ENCODE measurements at regions of chr2 and their contacts with region 1.

Region 1: GRCh38 chr2:219294356-219295351 is 14.5 kb downstream of the PTPRN start:
- DNase-seq: peak; percentile 92 to 93 (median 92)
- ATAC-seq: peak; percentile 96 to 98 (median 96)
- H3K4me3 ChIP-seq: peak overlapping the region; percentile 56 to 59 (median 57)
- H3K27ac ChIP-seq: peak overlapping the region in 2 of 3 donors; percentile 40 to 63
- H3K4me1 ChIP-seq: peaks cover 0 to 2% (median 0%) of the 10 kb centered on the region in 4 donors
- H3K27me3 ChIP-seq: no peaks in the 10 kb centered on the region
- CTCF ChIP-seq: peak; percentile 99 to 100 (median 99)
- POLR2A ChIP-seq: peak; percentile 49

Region 2: DNA sequence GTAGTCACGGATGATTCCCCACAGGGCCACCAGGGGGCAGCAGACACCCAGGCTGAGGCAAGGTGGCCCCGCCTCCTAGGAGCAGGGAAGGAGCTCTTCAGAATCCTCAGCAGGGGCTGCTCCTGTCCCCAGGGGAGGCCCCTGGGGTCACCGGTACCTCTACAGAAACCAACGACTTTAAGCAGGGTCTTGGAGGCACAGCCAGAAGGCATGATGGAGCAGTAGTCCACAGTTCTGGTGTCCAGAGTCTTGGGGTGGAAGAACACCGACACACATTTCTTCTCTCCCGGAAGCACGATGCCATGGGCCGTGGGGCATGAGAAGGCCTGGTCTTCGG is 264.9 kb before region 1 on chr2:
- intact Hi-C with region 1: loop called in 1 of 2 experiments (anchors 10 kb)
- DNase-seq: peak; percentile 81 to 88 (median 86)
- ATAC-seq: peak; percentile 93 to 99 (median 98)
- H3K4me3 ChIP-seq: no peak overlapping the region
- H3K27ac ChIP-seq: no peak overlapping the region
- H3K4me1 ChIP-seq: no peaks in the 10 kb centered on the region
- H3K27me3 ChIP-seq: no peaks in the 10 kb centered on the region
- CTCF ChIP-seq: peak; percentile 90 to 99 (median 98)
- POLR2A ChIP-seq: no peak

Region 3: DNA sequence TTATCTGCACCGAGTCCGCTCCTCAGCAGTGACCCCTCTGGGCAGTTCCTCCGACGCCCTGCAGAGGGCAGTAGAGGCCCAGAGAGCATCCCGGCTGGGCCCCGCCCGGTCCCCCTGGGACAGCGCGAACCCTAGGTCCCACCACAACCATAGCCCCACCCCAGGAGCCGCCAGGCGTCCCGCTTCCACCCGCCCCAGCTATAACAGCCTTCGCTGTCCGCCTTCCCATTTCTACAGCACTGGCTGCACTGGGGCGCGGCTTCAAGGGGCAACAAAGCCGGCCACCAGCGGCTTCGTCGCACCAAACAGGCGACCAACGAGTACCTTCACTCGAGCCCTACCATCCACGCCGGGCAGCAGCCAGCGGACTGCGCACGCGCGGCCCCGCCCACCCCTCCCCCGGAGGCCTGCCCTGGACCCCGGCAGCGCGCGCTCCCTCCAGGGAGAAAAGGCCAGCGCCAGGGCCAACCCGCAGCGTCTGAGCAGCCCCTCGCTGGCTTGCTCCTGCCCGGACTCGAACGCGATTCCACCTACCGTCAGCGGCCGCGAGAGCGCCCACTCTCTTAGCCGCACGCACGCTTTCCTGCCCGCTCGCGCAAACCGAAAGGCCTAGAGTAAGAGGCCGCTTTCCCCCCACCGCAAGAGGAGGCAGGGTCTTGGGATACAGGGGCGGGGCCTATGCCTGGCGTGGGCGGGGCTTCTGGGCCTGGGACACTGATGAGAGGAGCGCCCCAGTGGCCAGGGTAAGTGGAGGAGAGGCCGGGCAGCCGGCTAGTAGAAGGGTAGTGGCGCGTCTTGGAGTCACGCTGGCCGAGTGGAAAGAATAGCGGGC is 134.3 kb before region 1 on chr2 and contains the start of gene NHEJ1:
- intact Hi-C with region 1: loop called in 1 of 2 experiments (anchors 5 kb)
- DNase-seq: peak; percentile 97 to 99 (median 98)
- ATAC-seq: peak; percentile 95 to 99 (median 96)
- H3K4me3 ChIP-seq: peak within 1 kb of the TSS; percentile 58 to 70 (median 66)
- H3K27ac ChIP-seq: peak within 1 kb of the TSS; percentile 84 to 89 (median 86)
- H3K4me1 ChIP-seq: peaks cover 0 to 11% (median 2%) of the 10 kb centered on the region in 4 donors
- H3K27me3 ChIP-seq: no peaks in the 10 kb centered on the region
- CTCF ChIP-seq: peak; percentile 96 to 100 (median 98)
- POLR2A ChIP-seq: peak; percentile 60
- total RNA-seq, gene NHEJ1: 5.8 to 16.7 (median 10.9) TPM

Region 4: GRCh38 chr2:219229305-219230058 is 65.2 kb before region 1 on chr2 and contains the starts of genes ANKZF1 and ATG9A:
- intact Hi-C with region 1: loop called in 1 of 2 experiments (anchors 10 kb)
- DNase-seq: peak; percentile 98 to 100 (median 99)
- ATAC-seq: peak; percentile 96 to 99 (median 96)
- H3K4me3 ChIP-seq: peak within 1 kb of the TSS; percentile 66 to 90 (median 77)
- H3K27ac ChIP-seq: peak within 1 kb of the TSS; percentile 90 to 98 (median 90)
- H3K4me1 ChIP-seq: peaks cover 0 to 14% (median 5%) of the 10 kb centered on the region in 4 donors
- H3K27me3 ChIP-seq: no peaks in the 10 kb centered on the region
- CTCF ChIP-seq: peak in 1 of 4 donors; percentile 2
- POLR2A ChIP-seq: peak; percentile 78
- total RNA-seq, gene ANKZF1: 19.3 to 27.8 (median 24.5) TPM
- total RNA-seq, gene ATG9A: 28.3 to 39.6 (median 33.2) TPM

Region 5: DNA sequence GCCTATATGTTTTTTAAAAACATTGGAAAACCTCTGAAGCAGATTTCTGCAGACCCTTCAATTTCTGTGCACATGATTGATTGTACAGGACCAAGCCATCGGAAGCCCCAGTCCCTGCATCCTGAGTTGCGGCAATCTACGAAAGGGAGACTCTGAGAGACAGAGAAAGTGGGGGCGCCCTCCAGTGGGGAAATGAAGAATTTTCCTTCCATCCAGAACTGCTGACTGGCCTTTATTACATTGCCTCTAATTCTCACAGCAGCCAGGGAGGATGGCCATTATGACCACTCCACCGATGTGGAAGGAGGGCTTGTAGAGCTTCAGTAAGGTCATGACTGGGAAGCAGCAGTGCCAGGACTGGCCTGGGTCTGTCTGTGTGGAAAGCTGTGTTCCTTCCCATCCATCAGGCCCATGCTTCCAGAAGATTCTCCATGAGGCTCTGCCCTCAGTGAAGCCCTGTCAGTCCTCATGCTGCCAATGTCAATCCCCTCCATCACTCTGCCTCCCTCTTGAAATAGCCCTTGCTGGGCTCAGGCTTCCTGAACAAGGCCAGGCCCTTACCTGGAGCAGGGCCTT is 57.9 kb after region 1 on chr2:
- intact Hi-C with region 1: no loop called
- DNase-seq: peak in 1 of 3 donors; percentile 52
- ATAC-seq: peak; percentile 46 to 76 (median 67)
- H3K4me3 ChIP-seq: no peak overlapping the region
- H3K27ac ChIP-seq: no peak overlapping the region
- H3K4me1 ChIP-seq: no peaks in the 10 kb centered on the region
- H3K27me3 ChIP-seq: peaks cover 0 to 3% of the 10 kb centered on the region in 2 donors
- CTCF ChIP-seq: peak; percentile 37 to 48 (median 44)
- POLR2A ChIP-seq: no peak

Region 6: DNA sequence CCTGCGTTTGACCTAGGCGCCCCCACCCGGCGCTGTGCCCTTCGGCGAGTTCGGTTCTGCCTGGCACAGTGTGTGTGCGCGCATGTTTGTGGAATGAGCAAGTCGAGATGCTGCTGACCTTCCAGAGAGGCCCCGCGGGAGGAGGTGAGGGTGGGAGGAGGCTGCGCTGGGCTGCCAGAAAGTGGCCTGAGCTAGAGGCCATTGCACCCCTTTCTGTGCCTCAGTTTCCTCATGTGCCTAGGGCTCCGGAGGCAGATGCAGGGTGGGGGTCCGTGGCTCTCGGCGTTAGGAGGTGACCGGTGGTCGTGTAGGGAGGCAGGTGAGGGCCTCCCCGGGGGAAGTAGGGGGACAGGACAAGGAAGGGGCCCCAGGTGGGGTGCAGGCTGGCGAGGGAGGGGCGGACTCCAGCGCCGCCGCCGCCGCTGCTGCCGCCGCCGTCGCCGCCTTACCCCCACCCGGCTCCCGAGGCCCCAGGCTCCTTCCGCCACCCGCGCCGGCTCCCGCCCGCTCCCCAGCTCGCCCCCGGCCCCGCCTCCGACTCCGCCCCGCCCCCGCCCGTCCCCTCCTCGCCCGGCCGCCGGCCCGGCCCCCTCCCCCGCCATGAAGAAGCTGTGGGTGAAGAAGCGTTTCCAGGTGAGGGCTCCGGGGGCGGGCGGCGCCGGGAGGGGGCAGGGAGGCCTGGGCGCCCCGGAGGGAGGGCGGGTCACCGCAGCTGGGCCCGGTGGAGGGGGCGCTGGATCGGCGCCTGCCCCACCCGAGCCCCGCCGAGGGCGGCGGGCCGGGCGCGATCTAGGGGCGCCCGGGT is 147.0 kb after region 1 on chr2:
- intact Hi-C with region 1: no loop called
- DNase-seq: no peak
- ATAC-seq: peak in 2 of 4 donors; percentile 5 to 13
- H3K4me3 ChIP-seq: peak overlapping the region in 2 of 3 donors; percentile 32 to 46
- H3K27ac ChIP-seq: no peak overlapping the region
- H3K4me1 ChIP-seq: peaks cover 0 to 3% (median 0%) of the 10 kb centered on the region in 4 donors
- H3K27me3 ChIP-seq: peaks cover 0 to 8% of the 10 kb centered on the region in 2 donors
- CTCF ChIP-seq: no peak
- POLR2A ChIP-seq: no peak